ENCODE measurements at regions of chr5 and their contacts with region 1.

Region 1: DNA sequence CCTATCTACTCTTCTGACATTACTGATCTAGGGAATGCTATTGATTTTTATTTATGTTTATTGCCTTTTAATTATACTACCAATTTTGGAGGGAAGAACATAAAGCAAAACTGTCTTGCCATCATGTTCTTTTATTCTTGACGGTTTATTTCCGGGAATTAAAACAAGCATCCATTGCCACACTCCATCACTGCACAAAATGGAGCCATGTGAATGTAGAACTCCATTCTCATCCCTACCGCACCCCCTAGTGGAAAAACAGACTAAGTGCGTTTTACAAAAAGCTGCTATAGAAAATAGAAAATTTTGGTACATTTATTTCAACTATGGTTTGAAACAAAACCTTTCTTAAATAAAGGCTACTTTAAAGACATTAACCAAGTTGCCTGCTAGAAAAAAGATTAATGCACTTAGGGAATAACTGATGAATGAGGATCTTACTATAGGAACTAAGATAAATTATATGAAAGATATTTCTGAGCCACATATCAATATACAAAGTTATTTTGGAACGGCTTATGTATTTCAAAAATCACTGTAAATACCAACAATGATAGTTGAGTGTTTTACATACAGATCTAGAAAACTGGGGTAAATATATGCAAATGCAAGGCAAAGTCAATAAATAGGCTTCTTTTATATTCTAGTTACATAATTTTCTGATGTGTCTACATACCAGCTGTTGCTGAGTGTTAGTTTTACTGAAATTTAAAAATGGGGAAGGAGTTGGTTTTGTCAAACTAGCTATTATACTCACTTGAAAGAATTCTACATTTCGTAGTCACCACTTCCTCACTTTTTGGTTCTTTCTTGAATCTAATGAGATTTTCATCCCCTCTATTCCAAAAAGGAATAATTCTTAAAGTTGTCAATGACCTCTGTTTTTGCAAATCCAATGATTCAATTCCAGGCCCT is 26.5 kb downstream of the OXCT1 start:
- DNase-seq: no peak
- H3K4me3 Mint-ChIP-seq: no peak overlapping the region
- H3K27ac Mint-ChIP-seq: no peak overlapping the region
- H3K4me1 Mint-ChIP-seq: peaks cover 9% of the 10 kb centered on the region
- H3K27me3 Mint-ChIP-seq: no peaks in the 10 kb centered on the region

Region 2: GRCh38 chr5:40904205-40904993 is 939.3 kb before region 1 on chr5:
- intact Hi-C with region 1: loop called (anchors 10 kb)
- DNase-seq: no peak
- H3K4me3 Mint-ChIP-seq: no peak overlapping the region
- H3K27ac Mint-ChIP-seq: no peak overlapping the region
- H3K4me1 Mint-ChIP-seq: no peaks in the 10 kb centered on the region
- H3K27me3 Mint-ChIP-seq: peaks cover 15% of the 10 kb centered on the region

Region 3: DNA sequence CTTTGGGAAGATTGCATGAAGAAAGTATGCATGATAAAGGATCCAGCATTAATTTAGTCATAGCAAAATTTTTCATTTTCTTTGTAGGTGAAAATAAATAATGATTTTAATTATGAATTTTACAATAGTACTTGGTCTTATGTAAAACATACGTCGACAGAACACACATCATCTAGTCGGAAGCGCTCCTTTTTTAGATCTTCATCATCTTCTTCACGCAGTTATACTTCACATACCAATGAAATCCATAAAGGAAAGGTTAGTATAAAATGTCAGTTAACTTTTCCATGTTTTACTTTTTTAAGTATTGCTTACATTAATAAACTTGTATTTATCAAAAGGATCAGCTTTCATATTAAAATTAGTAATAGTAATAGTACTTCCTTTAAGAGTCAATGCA is 898.6 kb before region 1 on chr5:
- intact Hi-C with region 1: no loop called
- DNase-seq: no peak
- H3K4me3 Mint-ChIP-seq: no peak overlapping the region
- H3K27ac Mint-ChIP-seq: no peak overlapping the region
- H3K4me1 Mint-ChIP-seq: no peaks in the 10 kb centered on the region
- H3K27me3 Mint-ChIP-seq: peaks cover 6% of the 10 kb centered on the region

Region 4: GRCh38 chr5:41695920-41696582 is 147.7 kb before region 1 on chr5:
- intact Hi-C with region 1: loop called (anchors 1 kb)
- DNase-seq: no peak
- H3K4me3 Mint-ChIP-seq: no peak overlapping the region
- H3K27ac Mint-ChIP-seq: no peak overlapping the region
- H3K4me1 Mint-ChIP-seq: no peaks in the 10 kb centered on the region
- H3K27me3 Mint-ChIP-seq: peaks cover 35% of the 10 kb centered on the region

Region 5: DNA sequence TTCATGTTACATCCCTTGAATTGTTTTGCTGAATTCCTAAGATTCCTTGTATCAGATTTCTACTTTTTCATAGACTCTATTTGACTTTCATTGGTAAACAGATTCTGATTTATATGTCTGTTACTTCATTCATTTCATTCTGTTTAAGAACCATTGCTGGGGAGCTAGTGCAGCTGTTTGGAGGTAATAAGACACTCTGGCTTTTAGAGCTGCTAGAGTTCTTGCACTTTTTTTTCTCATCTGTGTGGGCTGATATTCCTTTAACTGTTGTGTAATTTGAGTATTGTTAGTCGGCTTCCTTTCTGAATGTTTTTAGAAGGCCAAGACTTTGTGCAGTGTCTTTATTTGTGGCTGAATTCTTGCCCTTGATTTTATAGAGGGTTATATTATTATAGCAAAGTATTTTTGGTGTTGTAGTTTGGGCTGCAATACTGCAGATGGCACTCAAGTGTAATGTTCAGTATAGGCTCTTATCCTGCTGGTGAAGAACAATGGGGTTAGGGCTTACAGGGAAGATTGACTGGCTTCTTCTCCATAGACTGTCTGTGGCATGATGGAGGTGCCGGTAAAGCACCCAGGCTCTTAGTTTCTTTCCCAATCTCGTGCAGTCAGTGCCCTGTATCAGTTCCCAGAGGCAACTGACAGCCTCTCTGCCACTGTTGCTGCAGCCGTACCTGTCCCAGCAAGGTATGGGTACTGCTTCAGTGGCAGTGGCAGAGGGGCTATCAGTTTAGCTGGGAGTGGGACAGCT is 135.7 kb before region 1 on chr5:
- intact Hi-C with region 1: loop called (anchors 1 kb)
- DNase-seq: no peak
- H3K4me3 Mint-ChIP-seq: no peak overlapping the region
- H3K27ac Mint-ChIP-seq: no peak overlapping the region
- H3K4me1 Mint-ChIP-seq: no peaks in the 10 kb centered on the region
- H3K27me3 Mint-ChIP-seq: peaks cover 31% of the 10 kb centered on the region

Region 6: GRCh38 chr5:41754857-41755256 is 88.9 kb before region 1 on chr5:
- intact Hi-C with region 1: loop called (anchors 5 kb)
- DNase-seq: no peak
- H3K4me3 Mint-ChIP-seq: no peak overlapping the region
- H3K27ac Mint-ChIP-seq: no peak overlapping the region
- H3K4me1 Mint-ChIP-seq: peaks cover 27% of the 10 kb centered on the region
- H3K27me3 Mint-ChIP-seq: no peaks in the 10 kb centered on the region

Region 7: GRCh38 chr5:41787265-41787664 is 56.4 kb before region 1 on chr5:
- intact Hi-C with region 1: no loop called
- DNase-seq: no peak
- H3K4me3 Mint-ChIP-seq: no peak overlapping the region
- H3K27ac Mint-ChIP-seq: no peak overlapping the region
- H3K4me1 Mint-ChIP-seq: peaks cover 8% of the 10 kb centered on the region
- H3K27me3 Mint-ChIP-seq: no peaks in the 10 kb centered on the region

Region 8: DNA sequence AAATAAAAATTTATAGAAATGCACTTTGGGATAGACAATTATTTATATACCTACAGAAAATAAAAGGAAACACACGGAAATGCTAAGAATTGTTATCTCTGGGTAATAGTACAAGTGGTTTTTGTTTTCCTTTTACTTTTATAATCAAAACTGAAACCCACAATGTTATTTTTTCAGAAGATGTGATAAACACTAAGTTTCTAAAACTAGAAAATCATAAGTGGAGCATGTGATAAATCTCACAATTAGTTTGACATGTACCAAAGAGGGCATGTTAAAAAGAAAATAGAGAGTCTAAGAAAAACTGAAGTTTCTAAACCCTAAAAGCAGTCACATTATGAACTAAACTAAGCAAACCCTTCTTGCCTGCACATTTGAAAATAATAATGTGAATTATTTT is 34.6 kb before region 1 on chr5:
- intact Hi-C with region 1: loop called (anchors 5 kb)
- DNase-seq: no peak
- H3K4me3 Mint-ChIP-seq: no peak overlapping the region
- H3K27ac Mint-ChIP-seq: peak overlapping the region; percentile 33
- H3K4me1 Mint-ChIP-seq: peaks cover 49% of the 10 kb centered on the region
- H3K27me3 Mint-ChIP-seq: no peaks in the 10 kb centered on the region

Region 9: DNA sequence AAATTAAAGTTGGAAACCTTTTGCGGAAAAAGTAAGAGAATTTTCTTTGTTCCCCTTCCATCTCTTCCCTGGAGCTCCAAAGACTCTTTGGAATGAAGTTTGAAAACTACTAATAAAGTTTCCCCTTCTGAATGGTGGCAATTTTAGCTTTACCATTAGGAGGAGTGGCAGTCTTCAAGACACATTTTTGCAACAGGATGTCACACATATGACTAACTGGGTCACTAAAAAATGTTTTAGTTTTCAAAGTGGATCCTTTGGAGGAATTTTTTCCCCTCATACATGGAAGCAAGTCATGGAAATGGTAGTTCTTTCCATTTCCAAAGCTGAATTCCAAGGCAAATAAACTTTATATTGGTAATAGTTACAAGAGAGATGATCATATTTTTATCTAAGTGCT is 96.9 kb after region 1 on chr5:
- intact Hi-C with region 1: no loop called
- DNase-seq: no peak
- H3K4me3 Mint-ChIP-seq: no peak overlapping the region
- H3K27ac Mint-ChIP-seq: no peak overlapping the region
- H3K4me1 Mint-ChIP-seq: no peaks in the 10 kb centered on the region
- H3K27me3 Mint-ChIP-seq: no peaks in the 10 kb centered on the region

Measured in activated T-helper 2 cell treated with anti-CD3 and anti-CD28 coated beads, Interferon-gamma antibody, Interleukin-2, Interleukin-4, amounts not matched to agents 10 μg/mL and 5 μg/mL and 100 μg/mL, durations not matched to agents 14 hours and 24 hours and 36 hours (primary cell).